ENCODE measurements at regions of chr11 and their contacts with region 1.

Region 1: GRCh38 chr11:35363854-35364780 is 55.2 kb downstream of the SLC1A2 start:
- DNase-seq: peak; percentile 49 to 91
- H3K4me3 ChIP-seq: no peak overlapping the region
- H3K27ac ChIP-seq: peak overlapping the region; percentile 51 to 73
- H3K4me1 ChIP-seq: peaks cover 5 to 39% of the 10 kb centered on the region in 2 donors
- H3K27me3 ChIP-seq: no peaks in the 10 kb centered on the region
- CTCF ChIP-seq: no peak

Region 2: DNA sequence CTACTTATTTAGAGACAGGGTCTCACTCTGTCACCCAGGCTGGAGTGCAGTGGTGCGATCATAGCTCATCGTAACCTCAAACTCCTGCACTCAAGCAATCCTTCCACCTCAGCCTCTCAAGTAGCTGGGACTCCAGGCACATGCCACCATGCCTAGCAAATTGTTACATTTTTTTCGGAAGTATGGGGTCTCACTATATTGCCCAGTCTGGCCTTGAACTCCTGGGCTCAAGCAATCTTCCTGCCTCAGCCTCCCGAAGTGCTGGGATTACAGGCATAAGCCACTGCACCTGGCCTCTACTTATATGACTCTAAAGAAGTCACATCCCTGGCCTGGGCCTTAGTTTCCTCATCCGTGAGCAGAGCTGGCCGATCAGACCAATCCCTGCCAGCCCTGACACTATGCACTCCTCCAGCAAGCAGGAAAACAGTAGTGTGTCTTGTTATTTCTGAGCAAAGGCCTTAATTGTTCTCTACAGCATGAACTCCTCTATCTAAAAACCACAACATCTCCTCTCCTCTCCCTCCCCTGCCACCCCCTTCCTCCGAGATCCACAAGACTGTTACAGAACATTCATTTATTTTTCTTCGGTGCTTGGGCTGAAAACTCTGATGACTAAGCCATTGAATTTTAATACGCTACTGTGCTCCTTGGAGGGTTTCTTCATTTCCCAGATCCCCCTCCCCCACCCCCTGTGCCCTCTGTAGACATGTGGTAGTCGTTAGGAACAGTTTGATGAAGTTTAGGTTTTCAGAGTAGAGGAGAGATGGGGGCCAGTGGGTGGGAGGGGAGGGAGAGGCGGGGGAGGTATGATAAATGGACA is 1097.8 kb before region 1 on chr11:
- intact Hi-C with region 1: loop called (anchors 10 kb)
- DNase-seq: peak in 1 of 2 donors; percentile 83
- H3K4me3 ChIP-seq: peak overlapping the region in 1 of 2 donors; percentile 3
- H3K27ac ChIP-seq: peak overlapping the region; percentile 61 to 67
- H3K4me1 ChIP-seq: peaks cover 3 to 37% of the 10 kb centered on the region in 2 donors
- H3K27me3 ChIP-seq: no peaks in the 10 kb centered on the region
- CTCF ChIP-seq: no peak

Region 3: GRCh38 chr11:35165423-35166368 is 198.4 kb before region 1 on chr11:
- intact Hi-C with region 1: loop called (anchors 5 kb)
- DNase-seq: peak in 1 of 2 donors; percentile 84
- H3K4me3 ChIP-seq: no peak overlapping the region
- H3K27ac ChIP-seq: peak overlapping the region; percentile 87 to 89
- H3K4me1 ChIP-seq: peaks cover 23 to 87% of the 10 kb centered on the region in 2 donors
- H3K27me3 ChIP-seq: no peaks in the 10 kb centered on the region
- CTCF ChIP-seq: no peak

Region 4: DNA sequence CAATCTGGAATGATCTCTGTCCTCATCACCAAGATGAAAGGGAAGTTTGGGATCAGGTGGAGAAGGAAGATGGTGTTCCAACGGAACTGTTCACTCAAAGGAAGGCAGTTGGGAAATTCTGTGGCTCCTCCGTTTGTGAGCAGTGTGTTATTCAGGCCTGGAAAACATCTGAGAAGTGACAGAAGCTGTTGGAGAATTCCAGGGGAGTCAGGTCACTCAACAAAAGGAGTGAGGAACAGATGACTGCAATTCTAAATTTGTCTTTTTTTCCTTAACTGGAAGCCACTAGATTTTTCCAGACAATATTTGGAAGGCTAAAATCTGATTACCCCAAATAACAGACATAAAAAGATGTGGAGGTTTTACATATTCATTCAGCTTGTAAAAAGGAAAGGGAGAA is 117.4 kb before region 1 on chr11:
- intact Hi-C with region 1: loop called (anchors 5 kb)
- DNase-seq: peak in 1 of 2 donors; percentile 88
- H3K4me3 ChIP-seq: no peak overlapping the region
- H3K27ac ChIP-seq: peak overlapping the region; percentile 91 to 95
- H3K4me1 ChIP-seq: peaks cover 9 to 22% of the 10 kb centered on the region in 2 donors
- H3K27me3 ChIP-seq: no peaks in the 10 kb centered on the region
- CTCF ChIP-seq: no peak

Region 5: GRCh38 chr11:35260342-35260985 is 103.7 kb before region 1 on chr11:
- intact Hi-C with region 1: loop called (anchors 5 kb)
- DNase-seq: peak in 1 of 2 donors; percentile 78
- H3K4me3 ChIP-seq: peak overlapping the region in 1 of 2 donors; percentile 23
- H3K27ac ChIP-seq: peak overlapping the region; percentile 20 to 51
- H3K4me1 ChIP-seq: peaks cover 5 to 21% of the 10 kb centered on the region in 2 donors
- H3K27me3 ChIP-seq: no peaks in the 10 kb centered on the region
- CTCF ChIP-seq: no peak

Region 6: DNA sequence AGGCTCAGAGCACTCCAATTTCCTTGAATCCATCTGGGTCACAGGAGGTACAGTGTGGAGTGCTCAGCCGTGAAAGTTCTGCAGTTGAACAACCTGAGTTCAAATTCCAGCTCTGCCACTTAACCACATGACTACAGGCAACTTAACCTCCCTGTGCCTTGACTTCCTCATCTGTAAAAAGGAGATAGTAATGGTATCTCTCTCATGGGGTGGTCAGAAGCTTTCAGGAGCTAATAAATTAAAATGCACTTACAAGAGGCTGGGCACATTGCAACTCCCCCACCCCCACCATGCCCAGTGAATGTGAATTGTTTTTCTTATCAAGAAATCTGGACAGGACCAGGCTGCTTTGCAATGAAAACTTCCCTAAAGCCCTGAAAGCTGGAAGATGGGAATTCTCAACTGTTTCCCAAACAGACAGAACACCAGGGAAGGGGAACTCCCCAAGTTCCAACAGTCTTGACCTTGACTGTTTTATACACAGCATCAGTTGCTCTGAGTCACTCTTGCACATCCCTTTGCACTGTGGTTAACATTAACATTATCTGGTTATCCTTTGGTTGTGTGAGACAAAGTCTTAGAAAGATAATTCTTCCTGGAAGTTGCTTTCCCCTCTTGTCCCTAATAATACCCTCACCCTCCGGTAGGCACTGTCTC is 81.8 kb before region 1 on chr11:
- intact Hi-C with region 1: loop called (anchors 5 kb)
- DNase-seq: no peak
- H3K4me3 ChIP-seq: no peak overlapping the region
- H3K27ac ChIP-seq: peak overlapping the region; percentile 71 to 81
- H3K4me1 ChIP-seq: peaks cover 4 to 21% of the 10 kb centered on the region in 2 donors
- H3K27me3 ChIP-seq: no peaks in the 10 kb centered on the region
- CTCF ChIP-seq: no peak

Region 7: DNA sequence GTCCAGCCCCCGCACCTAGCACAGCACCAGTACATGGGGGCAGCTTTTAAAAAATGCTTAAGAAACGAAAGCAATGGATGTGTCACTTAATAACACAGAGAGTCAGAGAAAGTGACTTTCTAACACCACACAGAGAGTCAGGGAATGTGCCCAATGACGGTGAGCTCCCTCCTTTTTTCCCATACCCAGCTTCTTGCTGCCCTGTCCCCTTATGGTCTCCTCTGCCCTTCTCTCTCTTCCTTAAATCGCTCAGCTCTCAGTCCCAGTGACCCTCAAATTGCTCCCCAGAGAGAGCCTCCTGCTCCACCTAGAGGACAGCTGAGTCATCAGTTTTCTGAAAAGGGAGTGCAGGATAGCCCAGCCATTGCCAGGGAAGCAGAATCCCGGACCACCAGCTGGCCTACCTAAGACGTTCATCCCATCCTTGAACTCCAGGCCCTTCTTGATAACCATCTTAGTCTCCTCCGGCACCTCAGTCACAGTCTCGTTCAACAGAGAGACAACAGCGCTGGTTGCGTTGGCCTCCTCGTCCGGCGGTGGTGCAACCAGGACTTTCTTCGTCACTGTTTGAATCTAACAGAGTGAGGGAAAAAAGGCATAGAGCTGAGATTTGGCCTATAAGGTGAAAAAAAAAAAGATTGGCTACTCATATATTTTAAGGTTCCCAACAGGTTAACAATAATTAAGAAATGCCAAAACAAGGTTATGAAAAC is 58.3 kb before region 1 on chr11:
- intact Hi-C with region 1: no loop called
- DNase-seq: no peak
- H3K4me3 ChIP-seq: no peak overlapping the region
- H3K27ac ChIP-seq: no peak overlapping the region
- H3K4me1 ChIP-seq: no peaks in the 10 kb centered on the region
- H3K27me3 ChIP-seq: no peaks in the 10 kb centered on the region
- CTCF ChIP-seq: peak in 2 of 3 experiments; percentile 6 to 46

Region 8: DNA sequence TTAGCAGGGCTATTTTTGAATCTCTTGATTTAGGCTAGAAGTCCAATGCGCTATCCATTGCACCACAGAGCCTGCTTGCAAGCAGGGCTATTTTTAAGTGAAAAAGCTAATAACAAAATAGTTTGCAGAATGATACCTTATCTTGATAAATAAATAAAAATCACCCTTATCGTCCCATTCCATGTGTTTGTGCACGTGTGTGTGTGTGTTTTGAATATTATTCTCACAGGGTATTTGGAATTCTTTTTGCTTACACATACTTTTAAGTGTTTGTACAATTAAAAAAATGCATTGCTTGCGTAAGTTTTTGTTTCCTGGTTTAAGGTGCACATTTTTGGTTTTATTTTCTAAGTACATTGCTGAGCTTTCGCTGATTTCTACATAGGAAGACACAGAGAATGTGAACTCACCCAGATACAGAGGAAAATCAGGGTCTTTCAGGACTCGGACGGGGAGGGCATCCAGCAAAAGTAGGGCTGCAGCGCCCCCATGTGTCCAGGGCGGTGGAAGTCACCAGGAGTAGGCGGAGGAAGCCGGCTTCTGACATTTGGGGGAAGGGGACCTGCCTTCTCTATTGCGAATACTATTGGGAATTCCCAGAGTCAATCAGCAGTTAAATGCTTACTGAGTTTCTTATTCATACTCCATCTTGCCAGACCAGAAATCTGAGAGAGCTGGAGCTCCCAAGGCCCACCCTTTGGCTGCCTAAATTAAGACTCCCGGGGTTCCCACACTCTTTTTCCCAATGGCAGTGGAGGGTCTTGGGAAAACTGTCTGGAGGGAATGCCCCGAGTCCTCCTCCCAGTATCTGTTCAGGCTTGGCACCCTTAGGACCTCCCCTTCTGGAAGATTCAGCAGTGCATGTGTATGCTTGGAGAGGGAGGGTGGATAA is 28.1 kb after region 1 on chr11:
- intact Hi-C with region 1: loop called (anchors 2 kb)
- DNase-seq: peak in 1 of 2 donors; percentile 87
- H3K4me3 ChIP-seq: peak overlapping the region; percentile 39 to 44
- H3K27ac ChIP-seq: peak overlapping the region; percentile 66 to 74
- H3K4me1 ChIP-seq: peaks cover 4 to 27% of the 10 kb centered on the region in 2 donors
- H3K27me3 ChIP-seq: no peaks in the 10 kb centered on the region
- CTCF ChIP-seq: peak; percentile 91 to 95 (median 94)

Measured in ascending aorta (tissue), 2 donors.